ENCODE measurements at regions of chr14 and their contacts with region 1.

Region 1: GRCh38 chr14:76918751-76919543 is 92.7 kb downstream of the LRRC74A start:
- DNase-seq: peak; percentile 99
- H3K4me3 ChIP-seq: peak overlapping the region in 2 of 4 donors; percentile 2 to 9
- H3K27ac ChIP-seq: peak overlapping the region; percentile 91 to 95 (median 92)
- H3K4me1 ChIP-seq: peaks cover 0 to 63% (median 59%) of the 10 kb centered on the region in 4 donors
- H3K27me3 ChIP-seq: no peaks in the 10 kb centered on the region
- CTCF ChIP-seq: peak in 1 of 4 experiments; percentile 15
- EP300 ChIP-seq: peak in 3 of 4 donors; percentile 29 to 66 (median 52)
- POLR2A ChIP-seq: peak in 1 of 2 donors; percentile 6

Region 2: DNA sequence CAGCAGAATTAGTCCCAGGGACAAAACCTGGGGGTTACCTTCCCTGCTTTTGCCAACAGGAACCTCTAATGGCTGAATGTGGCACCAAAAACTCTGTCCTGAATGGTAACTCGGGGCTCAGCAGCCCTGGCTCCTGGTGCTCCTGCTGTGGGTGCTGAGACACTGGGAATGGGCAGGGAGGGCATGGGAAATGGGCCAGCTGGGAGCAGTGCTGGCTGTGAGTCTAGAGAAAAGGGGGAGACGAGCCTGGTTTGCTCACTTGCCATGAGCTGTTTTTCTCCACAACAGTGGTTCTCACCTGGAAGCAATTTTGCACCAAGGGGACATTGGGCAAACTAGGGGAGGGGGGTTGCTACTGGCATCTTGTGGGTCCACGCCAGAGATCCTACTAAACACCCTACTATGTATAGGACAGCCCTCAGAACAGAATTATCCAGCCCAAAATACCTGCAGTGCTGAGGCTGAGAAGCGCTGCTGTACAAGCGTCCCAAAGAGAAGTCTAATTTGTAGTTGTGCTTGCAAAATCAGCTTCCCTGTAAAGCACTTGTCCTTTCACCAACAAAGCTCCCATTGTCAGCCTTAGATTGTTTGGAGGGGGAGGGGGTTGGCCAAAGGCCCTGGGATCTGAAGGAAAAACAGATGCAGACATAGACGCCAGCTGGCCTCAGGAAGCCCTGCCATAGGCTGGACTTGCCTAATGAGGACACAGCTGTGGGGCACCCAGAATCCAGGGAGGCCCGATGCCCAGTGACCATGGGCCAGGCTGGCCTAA is 89.1 kb before region 1 on chr14:
- intact Hi-C with region 1: no loop called
- DNase-seq: peak; percentile 76
- H3K4me3 ChIP-seq: no peak overlapping the region
- H3K27ac ChIP-seq: peak overlapping the region in 3 of 4 donors; percentile 32 to 56 (median 32)
- H3K4me1 ChIP-seq: peaks cover 0 to 7% (median 0%) of the 10 kb centered on the region in 4 donors
- H3K27me3 ChIP-seq: no peaks in the 10 kb centered on the region
- CTCF ChIP-seq: no peak
- EP300 ChIP-seq: no peak
- POLR2A ChIP-seq: no peak

Region 3: GRCh38 chr14:76876076-76876475 is 42.9 kb before region 1 on chr14:
- intact Hi-C with region 1: no loop called
- DNase-seq: peak; percentile 82
- H3K4me3 ChIP-seq: no peak overlapping the region
- H3K27ac ChIP-seq: no peak overlapping the region
- H3K4me1 ChIP-seq: no peaks in the 10 kb centered on the region
- H3K27me3 ChIP-seq: no peaks in the 10 kb centered on the region
- CTCF ChIP-seq: peak; percentile 90 to 95 (median 92)
- EP300 ChIP-seq: no peak
- POLR2A ChIP-seq: no peak

Region 4: GRCh38 chr14:76956316-76957090 is 37.6 kb after region 1 on chr14:
- intact Hi-C with region 1: loop called (anchors 1 kb)
- DNase-seq: peak; percentile 95
- H3K4me3 ChIP-seq: peak overlapping the region; percentile 21 to 50 (median 42)
- H3K27ac ChIP-seq: peak overlapping the region; percentile 91 to 97 (median 96)
- H3K4me1 ChIP-seq: peaks cover 0 to 83% (median 77%) of the 10 kb centered on the region in 4 donors
- H3K27me3 ChIP-seq: no peaks in the 10 kb centered on the region
- CTCF ChIP-seq: peak in 3 of 4 experiments; percentile 27 to 33 (median 27)
- EP300 ChIP-seq: peak in 2 of 4 donors; percentile 22
- POLR2A ChIP-seq: no peak

Region 5: GRCh38 chr14:77028384-77029231 is 109.7 kb after region 1 on chr14 and contains the start of gene IRF2BPL:
- intact Hi-C with region 1: loop called (anchors 2 kb)
- DNase-seq: peak; percentile 100
- H3K4me3 ChIP-seq: peak within 1 kb of the TSS; percentile 85 to 96 (median 91)
- H3K27ac ChIP-seq: peak within 1 kb of the TSS; percentile 97 to 100 (median 100)
- H3K4me1 ChIP-seq: peaks cover 0 to 69% (median 52%) of the 10 kb centered on the region in 4 donors
- H3K27me3 ChIP-seq: no peaks in the 10 kb centered on the region
- CTCF ChIP-seq: no peak
- EP300 ChIP-seq: peak in 3 of 4 donors; percentile 71 to 94 (median 80)
- POLR2A ChIP-seq: peak; percentile 86 to 92
- total RNA-seq, gene IRF2BPL: 34.7 to 63.1 (median 57.9) TPM

Region 6: DNA sequence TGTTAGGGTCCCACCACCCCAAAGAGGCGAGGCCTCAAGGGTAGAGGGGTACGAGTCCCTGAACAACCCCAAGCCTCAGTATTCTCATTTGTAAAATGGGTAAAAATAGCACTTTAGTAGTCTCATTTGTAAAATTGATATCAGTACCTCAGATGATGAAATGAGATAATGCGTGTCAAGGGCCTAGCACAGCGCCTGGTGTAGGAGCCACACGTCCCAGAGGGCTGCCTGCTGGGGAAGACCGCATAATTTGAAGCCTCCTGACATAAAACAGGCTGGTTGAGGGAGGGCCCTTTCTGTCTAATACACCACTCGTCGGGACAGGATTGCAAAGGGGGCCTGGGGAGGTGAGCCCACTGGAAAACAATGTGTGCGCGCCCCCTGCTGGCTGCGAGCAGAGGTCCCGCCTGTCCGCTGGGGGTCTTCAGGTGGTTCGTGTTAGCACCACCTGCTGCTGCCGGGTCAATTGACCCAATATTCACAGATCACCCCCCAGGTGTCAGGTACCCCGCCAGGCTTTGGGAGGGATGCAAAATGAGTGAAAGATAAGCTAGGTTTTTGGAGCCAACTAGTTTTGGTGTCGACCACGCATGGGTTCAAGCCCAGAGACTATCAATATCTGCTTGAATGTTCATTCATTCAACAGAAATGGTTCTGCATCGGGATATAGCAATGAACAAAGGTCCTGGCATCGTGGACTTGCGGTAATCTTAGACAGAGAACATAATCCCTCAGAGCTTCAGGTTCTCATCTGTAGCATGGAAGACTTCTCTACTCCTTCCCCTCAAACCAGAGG is 134.3 kb after region 1 on chr14:
- intact Hi-C with region 1: loop called (anchors 1 kb)
- DNase-seq: peak; percentile 88
- H3K4me3 ChIP-seq: no peak overlapping the region
- H3K27ac ChIP-seq: peak overlapping the region; percentile 48 to 86 (median 84)
- H3K4me1 ChIP-seq: peaks cover 0 to 29% (median 25%) of the 10 kb centered on the region in 4 donors
- H3K27me3 ChIP-seq: no peaks in the 10 kb centered on the region
- CTCF ChIP-seq: peak; percentile 92 to 97 (median 96)
- EP300 ChIP-seq: peak in 1 of 4 donors; percentile 15
- POLR2A ChIP-seq: no peak

Region 7: DNA sequence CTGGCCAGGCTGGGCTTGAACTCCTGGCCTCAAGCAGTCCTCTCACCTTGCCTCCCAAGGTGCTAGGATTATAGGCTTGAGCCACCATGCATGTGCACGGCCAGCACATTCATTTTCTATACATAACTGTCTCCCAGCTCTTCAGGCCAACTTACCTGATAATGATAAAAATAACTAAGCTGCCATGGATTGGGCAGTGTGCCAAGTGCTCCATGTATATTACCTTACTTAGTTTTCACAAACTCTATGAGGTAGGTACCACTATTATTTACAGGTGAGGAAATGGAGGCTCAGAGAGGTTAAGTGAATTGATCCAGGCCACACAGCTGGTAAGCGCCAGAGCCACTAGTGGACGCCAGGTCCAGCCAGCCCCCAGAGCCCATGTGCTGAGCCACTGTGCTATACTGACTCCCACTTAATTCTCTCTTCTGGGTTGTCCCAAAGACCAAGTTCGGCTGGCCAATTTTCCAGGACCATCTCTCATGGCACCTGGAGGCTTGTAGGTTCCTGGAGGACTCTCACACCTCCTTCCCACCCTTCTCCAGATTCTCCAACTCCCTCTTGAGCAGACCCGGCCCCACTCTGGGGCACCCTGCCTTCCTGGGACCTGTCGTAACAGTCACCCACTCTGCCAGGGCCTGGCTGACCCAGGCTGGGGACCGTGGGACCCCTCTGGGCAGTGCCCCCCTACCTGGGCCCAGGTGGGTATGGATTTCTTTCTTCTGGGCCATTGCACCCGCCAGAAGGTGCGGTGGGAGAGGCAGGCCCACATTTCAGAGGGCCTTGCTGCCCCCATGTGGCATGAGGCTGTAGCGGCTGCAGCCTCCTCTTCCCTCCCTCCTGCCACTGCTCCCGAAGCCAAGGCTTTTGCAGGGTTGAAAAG is 148.9 kb after region 1 on chr14:
- intact Hi-C with region 1: loop called (anchors 1 kb)
- DNase-seq: peak; percentile 89
- H3K4me3 ChIP-seq: no peak overlapping the region
- H3K27ac ChIP-seq: peak overlapping the region in 3 of 4 donors; percentile 17 to 54 (median 20)
- H3K4me1 ChIP-seq: peaks cover 0 to 29% (median 19%) of the 10 kb centered on the region in 4 donors
- H3K27me3 ChIP-seq: no peaks in the 10 kb centered on the region
- CTCF ChIP-seq: peak; percentile 82 to 90 (median 88)
- EP300 ChIP-seq: no peak
- POLR2A ChIP-seq: no peak